Psoas muscle (tissue), 8 donors: ENCODE measurements at regions of chr19 and their contacts with region 1.

Region 1: DNA sequence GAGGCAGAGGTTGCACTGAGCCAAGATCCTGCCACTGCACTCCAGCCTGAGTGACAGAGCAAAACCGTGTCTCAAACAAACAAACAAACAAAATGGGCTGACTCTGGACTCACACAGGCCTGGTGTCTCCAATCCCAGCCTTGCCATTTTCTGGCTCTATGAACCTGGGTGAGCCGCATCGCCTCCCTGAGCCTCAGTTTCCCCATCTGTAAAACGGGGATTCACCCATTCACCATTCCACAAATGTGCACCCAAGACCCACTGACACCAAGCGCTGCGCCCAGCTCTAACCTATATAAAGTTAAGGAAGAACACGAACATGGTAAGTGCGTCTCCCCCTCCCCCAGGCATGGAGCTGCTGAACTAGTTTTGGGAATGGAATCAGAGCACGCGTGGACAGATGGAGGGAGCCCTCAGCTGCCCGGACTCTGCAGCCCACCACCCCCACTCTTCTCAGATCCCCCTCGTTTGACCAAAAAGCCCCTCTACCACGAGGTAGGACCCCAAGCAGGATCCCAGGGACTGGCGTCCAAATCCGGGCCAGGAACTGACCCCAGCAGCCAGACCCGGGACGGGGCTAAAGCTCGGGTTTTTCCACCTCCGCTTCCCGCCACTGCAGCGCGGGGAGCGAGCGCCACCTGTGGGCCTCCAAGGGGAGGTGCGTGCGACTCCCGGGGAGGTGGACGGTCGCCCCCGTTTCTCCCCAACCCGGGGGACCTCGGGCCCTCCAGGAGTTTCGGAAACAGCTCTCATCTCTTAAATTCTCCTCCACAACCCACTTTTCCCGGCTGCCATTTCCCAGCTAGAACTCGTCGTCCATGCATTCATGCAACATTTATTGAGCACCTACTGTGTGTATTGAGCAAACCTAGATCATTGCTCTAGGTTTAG is 33.0 kb upstream of the ADGRE5 start:
- DNase-seq: peak; percentile 60 to 80
- ATAC-seq: peak; percentile 77 to 92 (median 84)
- H3K4me3 ChIP-seq: peak overlapping the region; percentile 35
- H3K27ac ChIP-seq: no peak overlapping the region
- H3K4me1 ChIP-seq: no peaks in the 10 kb centered on the region
- H3K27me3 ChIP-seq: peaks cover 0 to 12% (median 6%) of the 10 kb centered on the region in 3 donors
- CTCF ChIP-seq: peak; percentile 94

Region 2: DNA sequence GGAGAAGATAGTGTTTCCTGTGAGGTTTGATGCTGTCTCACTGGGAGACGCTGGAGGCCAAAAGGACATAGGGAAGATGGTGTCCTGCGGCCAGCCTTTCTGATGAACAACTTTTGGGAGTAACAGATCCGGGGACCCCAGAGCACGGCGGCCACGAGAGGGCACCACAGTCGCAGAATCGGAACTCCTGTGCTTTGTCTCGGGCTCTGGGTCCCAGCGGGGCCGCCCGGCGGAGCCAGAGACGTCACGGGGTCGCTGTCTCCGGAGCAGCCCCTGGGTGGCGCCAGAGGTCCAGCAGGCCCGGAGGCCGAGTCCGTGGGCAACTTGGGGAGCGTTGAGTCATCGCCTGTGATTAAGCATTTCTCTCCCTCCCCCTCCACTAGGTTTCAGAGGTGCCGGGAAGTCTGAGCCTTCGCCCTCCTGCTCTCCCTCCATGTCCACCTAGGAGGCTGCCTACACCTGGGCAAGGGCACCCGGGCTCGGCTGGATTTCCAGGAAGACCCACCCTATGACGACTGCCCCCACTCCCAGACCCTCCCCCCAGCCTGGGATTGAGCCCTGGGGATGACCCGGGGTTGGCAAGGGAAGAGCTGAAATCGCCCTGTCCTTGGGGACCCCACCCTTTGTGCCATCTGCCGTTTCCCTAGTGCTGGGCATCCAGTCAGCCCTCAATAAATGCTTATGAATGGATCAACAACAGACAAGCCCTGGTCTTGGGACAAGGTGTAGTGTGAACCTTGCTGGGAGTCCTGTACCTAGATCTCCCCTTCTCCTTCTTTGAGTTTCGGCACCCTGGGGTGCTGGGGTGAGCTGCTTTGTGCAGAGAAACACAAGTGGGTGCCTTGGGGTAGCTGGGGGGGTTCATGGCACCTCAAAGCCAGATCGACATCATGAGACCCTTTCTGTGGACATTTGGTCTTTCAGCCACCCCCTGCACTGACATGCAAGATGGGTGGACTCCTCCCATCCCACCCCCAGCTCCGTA is 467.9 kb before region 1 on chr19:
- intact Hi-C with region 1: loop called in 1 of 2 experiments (anchors 10 kb)
- DNase-seq: peak; percentile 99
- ATAC-seq: peak; percentile 98 to 100 (median 98)
- H3K4me3 ChIP-seq: peak overlapping the region; percentile 53
- H3K27ac ChIP-seq: peak overlapping the region; percentile 83
- H3K4me1 ChIP-seq: peaks cover 15% of the 10 kb centered on the region
- H3K27me3 ChIP-seq: no peaks in the 10 kb centered on the region
- CTCF ChIP-seq: peak; percentile 98

Region 3: DNA sequence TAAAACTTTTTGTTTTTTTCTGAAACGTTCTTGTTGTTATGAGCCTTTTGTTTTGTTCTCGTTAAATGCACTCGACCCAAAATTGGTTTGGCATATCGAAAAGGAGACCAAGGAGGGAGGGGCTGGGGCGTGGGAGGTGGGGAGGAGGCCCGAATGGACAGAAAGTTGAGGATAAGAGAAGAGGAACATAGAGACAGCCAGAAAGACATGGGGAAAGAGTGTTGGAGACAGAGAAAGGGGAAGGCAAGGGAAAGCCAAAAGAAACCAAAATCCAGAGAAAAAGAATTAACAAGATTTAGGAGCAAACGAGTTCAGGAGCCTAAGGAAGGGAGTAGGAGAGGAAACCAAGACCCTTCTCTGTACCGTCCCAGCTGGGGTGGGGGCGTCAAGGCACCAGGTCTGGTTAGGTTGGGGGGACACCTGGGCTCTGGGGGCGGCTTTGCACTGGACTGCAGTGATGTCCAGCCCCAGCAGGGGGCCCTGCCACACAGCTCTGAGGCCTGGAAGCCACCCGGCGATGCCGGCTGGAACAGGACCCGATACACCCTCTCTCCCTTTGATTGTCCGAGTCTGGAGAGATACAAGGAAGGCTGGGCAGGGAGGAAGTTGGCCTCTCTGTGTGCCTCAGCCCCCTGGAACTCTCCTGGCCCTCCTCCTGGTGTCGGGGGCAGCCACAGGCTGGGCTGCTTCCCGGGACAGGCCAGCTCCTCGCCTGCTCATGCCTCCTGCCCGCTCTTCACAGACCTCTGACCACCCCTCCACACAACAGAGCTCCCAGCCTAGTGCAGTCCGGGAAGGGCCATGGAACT is 200.2 kb before region 1 on chr19:
- intact Hi-C with region 1: loop called (anchors 2 to 5 kb)
- DNase-seq: peak; percentile 72 to 84
- ATAC-seq: peak; percentile 76 to 88 (median 84)
- H3K4me3 ChIP-seq: no peak overlapping the region
- H3K27ac ChIP-seq: peak overlapping the region; percentile 41
- H3K4me1 ChIP-seq: peaks cover 9% of the 10 kb centered on the region
- H3K27me3 ChIP-seq: no peaks in the 10 kb centered on the region
- CTCF ChIP-seq: peak; percentile 72

Region 4: DNA sequence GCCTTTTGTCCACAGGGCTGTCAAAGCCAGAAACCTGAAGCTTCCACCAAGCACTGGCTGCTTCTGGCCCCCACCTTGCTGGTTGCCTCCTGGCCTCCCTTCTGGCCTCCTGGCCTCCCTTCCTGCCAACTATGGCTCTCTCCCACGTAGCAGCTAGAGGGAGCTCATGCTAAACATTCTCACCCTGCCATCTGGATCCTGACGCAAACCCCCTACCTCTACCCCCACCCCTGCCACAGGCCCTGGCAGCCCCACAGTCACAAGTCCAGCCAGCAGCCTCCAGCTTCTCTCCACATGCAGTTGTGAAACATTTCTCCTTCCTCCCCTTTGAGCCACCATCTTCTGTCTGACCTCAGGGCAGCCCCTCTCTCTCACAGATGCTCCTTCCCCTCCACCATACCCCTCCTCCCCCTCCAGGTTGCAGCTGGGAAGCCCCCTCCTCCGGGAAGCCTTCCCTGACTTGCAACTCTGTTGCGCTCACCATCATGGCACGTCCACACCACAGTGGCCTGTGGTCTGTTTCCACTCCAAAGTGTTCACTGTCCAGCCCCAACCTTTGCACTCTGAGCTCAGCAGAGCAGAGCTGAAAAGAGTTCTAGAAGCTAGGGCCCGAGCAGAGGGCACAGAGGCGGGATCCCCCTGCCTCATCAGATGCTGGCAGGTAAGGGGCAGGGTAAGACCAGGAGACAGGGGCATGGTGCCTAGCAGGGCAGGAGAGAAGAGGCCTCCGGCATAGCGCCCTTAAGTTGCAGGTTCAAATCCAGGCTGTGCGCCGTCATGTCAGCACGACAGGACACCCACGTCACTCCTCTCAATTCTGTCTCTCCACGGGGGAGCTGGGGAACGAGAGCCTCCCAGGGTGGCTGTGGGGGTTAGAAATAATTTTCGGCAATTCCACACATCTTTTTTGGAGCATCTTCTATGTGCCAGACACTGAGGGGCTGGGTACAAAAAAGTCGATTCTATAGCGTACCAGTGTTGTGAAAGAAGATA is 149.6 kb before region 1 on chr19:
- intact Hi-C with region 1: loop called in 1 of 2 experiments (anchors 5 kb)
- DNase-seq: no peak
- ATAC-seq: no peak
- H3K4me3 ChIP-seq: no peak overlapping the region
- H3K27ac ChIP-seq: no peak overlapping the region
- H3K4me1 ChIP-seq: no peaks in the 10 kb centered on the region
- H3K27me3 ChIP-seq: peaks cover 0 to 8% (median 3%) of the 10 kb centered on the region in 3 donors
- CTCF ChIP-seq: no peak

Region 5: DNA sequence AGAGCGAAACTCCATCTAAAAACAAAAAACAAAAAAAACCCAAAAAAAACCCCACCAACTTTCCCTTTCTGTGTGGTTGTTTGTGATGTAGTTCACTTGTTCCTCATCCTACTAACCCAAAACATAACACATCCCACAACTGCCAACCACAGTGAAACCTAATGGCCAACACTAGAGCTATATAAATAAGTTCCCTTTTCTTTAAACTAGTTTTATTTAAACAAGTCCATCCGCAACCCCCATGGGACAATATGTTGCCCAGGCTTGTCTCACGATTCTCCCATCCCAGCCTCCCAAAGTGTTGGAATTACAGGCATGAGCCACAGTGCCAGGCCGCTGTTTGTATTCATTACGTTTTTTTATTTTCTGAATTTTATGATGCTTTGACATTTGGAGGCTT is 38.2 kb before region 1 on chr19:
- intact Hi-C with region 1: loop called in 1 of 2 experiments (anchors 1 kb)
- DNase-seq: no peak
- ATAC-seq: no peak
- H3K4me3 ChIP-seq: no peak overlapping the region
- H3K27ac ChIP-seq: no peak overlapping the region
- H3K4me1 ChIP-seq: no peaks in the 10 kb centered on the region
- H3K27me3 ChIP-seq: peaks cover 0 to 6% (median 3%) of the 10 kb centered on the region in 3 donors
- CTCF ChIP-seq: no peak

Region 6: DNA sequence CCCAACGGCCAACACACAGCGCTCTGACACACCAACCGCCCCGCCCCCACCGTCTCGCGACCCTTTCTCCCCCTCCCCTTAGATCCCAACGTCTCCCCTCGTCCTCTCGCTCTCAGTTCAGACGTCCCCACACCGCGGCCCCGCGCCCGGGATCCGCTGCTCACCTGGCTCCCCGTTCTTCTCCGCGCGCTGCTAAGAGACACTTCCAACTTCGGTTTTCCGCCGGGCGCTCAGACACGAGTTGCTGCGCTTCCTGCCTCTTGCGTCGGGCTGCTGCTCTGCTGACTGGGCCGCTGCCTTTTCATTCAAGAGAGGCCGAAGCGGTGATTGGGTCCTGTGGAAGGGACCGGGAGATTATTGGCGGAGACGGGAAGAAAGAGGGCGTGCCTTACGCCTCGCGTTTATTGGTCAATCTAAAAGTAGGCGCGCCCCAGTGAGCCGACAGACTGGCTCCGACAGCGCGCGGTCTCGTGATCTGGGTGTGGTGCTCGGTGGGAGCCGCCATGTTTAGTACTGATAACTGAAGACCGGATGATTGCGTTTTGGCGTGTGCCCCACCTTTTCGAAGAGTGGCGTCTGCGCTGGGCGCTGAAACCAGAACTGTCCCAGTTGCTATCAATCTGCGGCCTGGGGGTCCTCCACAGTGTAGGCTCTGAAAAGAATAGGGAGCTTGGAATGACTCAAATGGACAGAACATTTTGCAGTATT is 71.0 kb after region 1 on chr19 and contains the start of gene DDX39A:
- intact Hi-C with region 1: no loop called
- DNase-seq: peak; percentile 98
- ATAC-seq: peak; percentile 98 to 99 (median 99)
- H3K4me3 ChIP-seq: peak within 1 kb of the TSS; percentile 99
- H3K27ac ChIP-seq: peak within 1 kb of the TSS; percentile 95
- H3K4me1 ChIP-seq: peaks cover 20% of the 10 kb centered on the region
- H3K27me3 ChIP-seq: no peaks in the 10 kb centered on the region
- CTCF ChIP-seq: no peak
- total RNA-seq, gene DDX39A: 14.8 to 32.4 (median 26.6) TPM

Region 7: GRCh38 chr19:14517840-14518505 is 169.7 kb after region 1 on chr19 and contains the start of gene DNAJB1:
- intact Hi-C with region 1: no loop called
- DNase-seq: peak; percentile 85 to 92
- ATAC-seq: peak; percentile 76 to 84 (median 78)
- H3K4me3 ChIP-seq: peak within 1 kb of the TSS; percentile 82
- H3K27ac ChIP-seq: peak within 1 kb of the TSS; percentile 98
- H3K4me1 ChIP-seq: peaks cover 42% of the 10 kb centered on the region
- H3K27me3 ChIP-seq: no peaks in the 10 kb centered on the region
- CTCF ChIP-seq: no peak
- total RNA-seq, gene DNAJB1: 32.6 to 105 (median 42.6) TPM

Region 8: GRCh38 chr19:14661372-14661924 is 313.2 kb after region 1 on chr19:
- intact Hi-C with region 1: no loop called
- DNase-seq: no peak
- ATAC-seq: no peak
- H3K4me3 ChIP-seq: no peak overlapping the region
- H3K27ac ChIP-seq: no peak overlapping the region
- H3K4me1 ChIP-seq: no peaks in the 10 kb centered on the region
- H3K27me3 ChIP-seq: peaks cover 0 to 14% (median 0%) of the 10 kb centered on the region in 3 donors
- CTCF ChIP-seq: no peak